MCF 10A (cell line): ENCODE measurements at regions of chr6 and their contacts with region 1.

Region 1: GRCh38 chr6:156154896-156155295 is 622.3 kb upstream of the ARID1B start:
- DNase-seq: peak; percentile 54
- H3K4me3 Mint-ChIP-seq: no peak overlapping the region
- H3K27ac Mint-ChIP-seq: no peak overlapping the region
- H3K4me1 Mint-ChIP-seq: peaks cover 23% of the 10 kb centered on the region
- H3K27me3 Mint-ChIP-seq: no peaks in the 10 kb centered on the region
- CTCF ChIP-seq: no peak

Region 2: GRCh38 chr6:156131221-156131903 is 23.5 kb before region 1 on chr6:
- CTCF ChIA-PET with region 1: no interaction called
- POLR2A ChIA-PET with region 1: no interaction called
- intact Hi-C with region 1: no loop called
- DNase-seq: no peak
- H3K4me3 Mint-ChIP-seq: no peak overlapping the region
- H3K27ac Mint-ChIP-seq: no peak overlapping the region
- H3K4me1 Mint-ChIP-seq: peaks cover 4% of the 10 kb centered on the region
- H3K27me3 Mint-ChIP-seq: no peaks in the 10 kb centered on the region
- CTCF ChIP-seq: no peak

Region 3: DNA sequence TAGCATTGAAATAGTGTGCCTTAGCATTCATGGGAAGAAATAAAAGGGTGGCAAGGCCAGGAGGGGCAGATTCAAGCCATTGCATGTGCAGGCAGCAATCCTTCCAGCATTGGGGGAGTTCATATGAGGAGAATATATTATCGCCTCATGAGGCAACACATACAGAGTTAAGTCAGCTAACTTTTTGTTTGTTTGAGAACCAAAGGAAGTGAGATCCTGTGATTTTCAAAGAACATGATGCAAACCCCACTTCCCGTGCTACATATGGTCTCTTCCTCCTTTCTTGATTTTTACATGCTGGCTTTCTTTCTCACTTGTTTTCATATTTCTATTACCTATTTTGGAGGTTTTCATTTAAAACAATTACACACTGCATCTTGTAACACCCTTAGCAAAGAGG is 42.6 kb after region 1 on chr6:
- CTCF ChIA-PET with region 1: no interaction called
- POLR2A ChIA-PET with region 1: no interaction called
- intact Hi-C with region 1: loop called (anchors 2 kb)
- DNase-seq: no peak
- H3K4me3 Mint-ChIP-seq: no peak overlapping the region
- H3K27ac Mint-ChIP-seq: no peak overlapping the region
- H3K4me1 Mint-ChIP-seq: no peaks in the 10 kb centered on the region
- H3K27me3 Mint-ChIP-seq: no peaks in the 10 kb centered on the region
- CTCF ChIP-seq: no peak